Activated CD4-positive, alpha-beta T cell treated with anti-CD3 and anti-CD28 coated beads, Interleukin-2, amount 10 ng/mL, durations not matched to agents 24 days and 14 days (primary cell): ENCODE measurements at regions of chr10 and their contacts with region 1.

Region 1: DNA sequence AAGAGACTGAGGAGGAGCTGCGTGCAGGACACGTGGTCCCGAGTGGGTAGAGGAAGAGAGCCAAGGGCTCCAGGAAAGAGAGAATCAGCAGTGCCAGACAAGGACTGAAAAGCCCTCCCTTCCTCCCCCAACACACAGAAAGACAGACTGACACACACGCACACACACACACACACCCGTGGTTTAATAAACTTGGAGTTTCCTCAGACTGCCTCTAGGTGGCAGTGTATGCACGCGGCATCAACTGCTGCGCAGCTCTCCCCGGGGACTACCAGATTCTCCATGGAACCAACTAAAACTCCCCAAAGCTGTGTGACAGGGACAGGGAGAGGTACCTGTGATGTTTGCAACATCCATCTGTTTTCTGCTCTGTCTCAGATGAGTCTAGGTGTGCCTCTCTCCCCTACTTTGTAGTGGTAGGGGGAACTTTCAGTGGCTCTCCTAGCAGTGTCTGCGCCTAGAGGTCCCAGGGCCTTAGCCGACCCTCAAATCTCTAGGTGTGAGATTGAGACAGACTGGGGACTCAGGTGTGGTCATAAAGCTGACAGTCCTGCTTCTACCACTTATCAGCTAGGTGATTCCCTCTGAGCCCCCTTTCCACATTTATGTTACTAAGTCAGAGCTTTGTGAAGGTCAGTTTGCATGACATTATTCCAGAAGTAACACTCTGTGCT is 9.3 kb upstream of the TSPAN14 start:
- DNase-seq: peak; percentile 89
- H3K4me3 Mint-ChIP-seq: peak overlapping the region; percentile 5
- H3K27ac Mint-ChIP-seq: peak overlapping the region; percentile 22
- H3K4me1 Mint-ChIP-seq: peaks cover 29% of the 10 kb centered on the region
- H3K27me3 Mint-ChIP-seq: peaks cover 8% of the 10 kb centered on the region

Region 2: DNA sequence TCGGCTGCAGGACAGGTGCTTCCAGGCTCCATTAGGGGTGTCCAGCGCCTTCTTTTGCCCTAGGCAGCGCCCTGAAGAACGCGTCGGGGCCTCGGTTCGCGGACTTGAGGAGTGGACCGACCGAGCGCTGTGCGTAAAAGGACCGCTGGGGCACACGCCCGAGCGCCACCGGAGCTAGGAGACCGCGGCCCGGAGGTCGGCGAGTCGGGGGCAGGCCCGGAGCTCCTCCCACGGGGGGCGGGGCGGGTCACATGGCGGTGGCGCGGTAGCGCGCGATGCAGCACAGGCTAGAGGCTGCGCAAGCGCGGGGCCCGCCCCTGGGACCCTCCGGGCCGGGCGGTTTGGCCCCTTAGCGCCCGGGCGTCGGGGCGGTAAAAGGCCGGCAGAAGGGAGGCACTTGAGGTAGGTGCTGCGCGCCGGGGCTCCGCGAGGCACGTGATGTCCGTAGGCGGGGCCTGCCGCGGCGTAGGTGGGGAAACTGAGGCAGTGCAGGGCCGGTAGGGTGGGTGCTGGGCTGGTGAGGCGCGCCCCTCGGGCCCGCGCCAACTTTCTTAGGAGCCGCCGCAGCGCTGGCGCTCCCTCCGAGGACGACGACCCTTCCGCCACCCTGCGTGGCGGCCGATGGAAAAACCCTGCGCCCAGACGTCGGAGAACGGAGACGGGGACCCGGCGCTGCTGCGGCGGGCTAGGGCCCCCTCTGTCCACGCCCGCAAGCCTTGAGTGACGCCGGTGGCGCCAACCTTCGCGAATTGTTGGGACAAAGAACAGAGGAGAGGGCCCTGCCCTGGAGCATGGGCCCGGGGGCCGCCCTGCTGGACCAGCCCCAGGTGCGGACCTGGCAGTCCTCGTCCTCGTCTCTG is 36.3 kb before region 1 on chr10 and contains the start of gene PRXL2A:
- intact Hi-C with region 1: loop called (anchors 2 kb)
- DNase-seq: peak; percentile 95
- H3K4me3 Mint-ChIP-seq: peak within 1 kb of the TSS; percentile 90
- H3K27ac Mint-ChIP-seq: peak within 1 kb of the TSS; percentile 96
- H3K4me1 Mint-ChIP-seq: peaks cover 31% of the 10 kb centered on the region
- H3K27me3 Mint-ChIP-seq: peaks cover 27% of the 10 kb centered on the region
- total RNA-seq, gene PRXL2A: 14.8 and 16.4 TPM in 2 replicates

Region 3: DNA sequence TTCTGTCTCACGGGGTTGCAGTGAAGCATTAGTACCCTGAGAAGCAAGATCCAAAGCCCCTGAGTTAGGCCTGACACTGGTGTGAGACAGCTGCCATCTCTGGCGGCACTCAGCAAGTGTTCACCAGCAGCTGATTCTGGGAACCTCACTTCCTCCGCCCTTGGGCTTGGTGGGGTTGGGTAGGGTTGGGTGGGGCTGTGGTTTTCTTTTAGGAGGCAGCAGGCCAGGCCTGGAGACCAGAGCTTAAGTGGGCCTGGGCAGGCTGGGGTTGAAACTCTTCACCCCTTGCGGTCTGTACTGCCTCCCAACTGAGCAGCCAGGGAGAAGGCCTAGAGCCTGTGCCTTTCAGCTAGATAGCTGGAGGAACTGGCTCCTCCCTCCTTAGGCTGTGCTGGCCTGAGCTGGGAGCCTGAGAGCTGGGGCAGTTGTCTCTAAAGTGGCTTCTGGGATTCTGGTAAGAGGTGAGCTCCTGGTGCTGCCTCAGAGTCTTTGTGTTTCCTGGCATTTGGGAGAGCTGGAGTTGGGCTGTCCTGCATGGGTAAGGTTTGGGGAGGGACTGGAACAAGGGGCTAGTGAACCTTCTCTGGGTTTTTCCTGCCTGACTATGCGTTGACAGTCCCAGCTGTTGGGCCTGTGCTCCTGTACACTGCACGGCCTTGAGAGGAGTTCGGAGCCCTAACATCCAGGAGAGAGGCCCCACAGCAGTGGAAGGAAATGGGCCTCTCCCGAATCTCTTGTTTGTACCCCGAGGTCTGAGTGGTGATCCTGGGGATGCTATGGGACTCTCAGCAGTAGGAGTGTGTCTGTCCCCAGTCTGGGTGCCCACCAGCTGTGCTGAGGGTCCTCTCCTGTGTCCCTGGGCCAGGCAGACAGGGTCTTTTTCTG is 14.5 kb after region 1 on chr10:
- intact Hi-C with region 1: no loop called
- DNase-seq: peak; percentile 91
- H3K4me3 Mint-ChIP-seq: peak overlapping the region; percentile 98
- H3K27ac Mint-ChIP-seq: peak overlapping the region; percentile 88
- H3K4me1 Mint-ChIP-seq: peaks cover 84% of the 10 kb centered on the region
- H3K27me3 Mint-ChIP-seq: no peaks in the 10 kb centered on the region

Region 4: DNA sequence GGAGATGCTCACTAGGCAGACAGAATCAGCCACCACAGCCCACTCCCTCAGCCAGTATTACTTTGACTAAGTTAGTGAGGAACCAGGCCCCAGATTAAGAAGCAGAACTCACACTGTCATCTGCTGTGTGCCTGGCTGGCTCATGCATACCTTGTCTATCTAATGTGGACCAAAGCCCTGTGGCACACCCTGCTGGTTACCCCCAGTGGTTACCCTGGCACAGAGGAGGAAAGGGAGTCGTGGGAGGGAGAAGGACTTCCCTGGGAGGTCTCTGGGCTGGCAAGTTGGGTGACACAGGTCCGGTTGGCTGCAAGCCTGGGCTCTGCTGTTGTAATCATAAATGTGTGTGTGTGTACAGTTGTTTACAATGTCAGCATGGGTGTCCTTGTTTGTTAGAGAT is 85.5 kb after region 1 on chr10:
- intact Hi-C with region 1: loop called (anchors 1 kb)
- DNase-seq: peak; percentile 80
- H3K4me3 Mint-ChIP-seq: peak overlapping the region; percentile 34
- H3K27ac Mint-ChIP-seq: peak overlapping the region; percentile 81
- H3K4me1 Mint-ChIP-seq: peaks cover 65% of the 10 kb centered on the region
- H3K27me3 Mint-ChIP-seq: no peaks in the 10 kb centered on the region

Region 5: DNA sequence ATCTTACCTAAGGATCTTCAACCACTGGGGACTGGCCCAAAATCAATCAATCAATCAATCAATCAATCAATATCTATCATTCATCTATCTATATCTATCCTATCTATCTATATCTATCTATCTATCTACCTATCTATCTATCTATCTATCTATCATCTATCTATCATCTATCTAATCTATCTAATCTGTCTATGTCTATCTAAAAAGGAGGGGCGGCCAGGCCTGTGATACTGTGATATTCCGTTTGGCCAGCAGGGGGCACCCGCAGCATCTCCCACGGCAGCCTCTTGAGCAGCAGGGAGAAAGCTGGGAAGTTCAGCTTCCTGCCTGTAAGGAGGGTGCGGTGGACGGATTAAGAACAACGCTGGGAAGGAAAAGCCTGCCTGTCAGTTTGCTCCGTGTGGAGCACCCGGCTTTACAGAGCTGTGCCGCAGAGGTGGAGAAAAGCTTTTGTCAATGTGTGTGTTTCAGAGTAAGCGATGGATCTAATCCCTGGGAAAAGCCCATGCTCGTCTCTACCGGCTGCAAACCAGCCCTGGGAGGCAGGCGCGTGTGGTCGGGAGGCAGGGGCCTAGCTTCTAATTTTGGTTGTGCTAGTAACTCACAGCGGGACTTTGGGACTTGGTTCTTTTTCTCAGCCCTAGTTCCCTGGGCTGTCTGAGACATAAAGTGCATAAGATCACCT is 217.9 kb after region 1 on chr10:
- intact Hi-C with region 1: loop called (anchors 5 kb)
- DNase-seq: peak; percentile 89
- H3K4me3 Mint-ChIP-seq: peak overlapping the region; percentile 7
- H3K27ac Mint-ChIP-seq: no peak overlapping the region
- H3K4me1 Mint-ChIP-seq: peaks cover 3% of the 10 kb centered on the region
- H3K27me3 Mint-ChIP-seq: peaks cover 12% of the 10 kb centered on the region